MCF 10A (cell line): ENCODE measurements at regions of chr17 and their contacts with region 1.

Region 1: GRCh38 chr17:55433629-55434305 is 12.1 kb upstream of the MMD start:
- DNase-seq: peak; percentile 95
- H3K4me3 Mint-ChIP-seq: peak overlapping the region; percentile 30
- H3K27ac Mint-ChIP-seq: peak overlapping the region; percentile 96
- H3K4me1 Mint-ChIP-seq: peaks cover 44% of the 10 kb centered on the region
- H3K27me3 Mint-ChIP-seq: no peaks in the 10 kb centered on the region
- CTCF ChIP-seq: no peak

Region 2: GRCh38 chr17:55116440-55116914 is 317.3 kb before region 1 on chr17:
- CTCF ChIA-PET with region 1: no interaction called
- POLR2A ChIA-PET with region 1: no interaction called
- intact Hi-C with region 1: no loop called
- DNase-seq: no peak
- H3K4me3 Mint-ChIP-seq: no peak overlapping the region
- H3K27ac Mint-ChIP-seq: no peak overlapping the region
- H3K4me1 Mint-ChIP-seq: no peaks in the 10 kb centered on the region
- H3K27me3 Mint-ChIP-seq: no peaks in the 10 kb centered on the region
- CTCF ChIP-seq: no peak

Region 3: DNA sequence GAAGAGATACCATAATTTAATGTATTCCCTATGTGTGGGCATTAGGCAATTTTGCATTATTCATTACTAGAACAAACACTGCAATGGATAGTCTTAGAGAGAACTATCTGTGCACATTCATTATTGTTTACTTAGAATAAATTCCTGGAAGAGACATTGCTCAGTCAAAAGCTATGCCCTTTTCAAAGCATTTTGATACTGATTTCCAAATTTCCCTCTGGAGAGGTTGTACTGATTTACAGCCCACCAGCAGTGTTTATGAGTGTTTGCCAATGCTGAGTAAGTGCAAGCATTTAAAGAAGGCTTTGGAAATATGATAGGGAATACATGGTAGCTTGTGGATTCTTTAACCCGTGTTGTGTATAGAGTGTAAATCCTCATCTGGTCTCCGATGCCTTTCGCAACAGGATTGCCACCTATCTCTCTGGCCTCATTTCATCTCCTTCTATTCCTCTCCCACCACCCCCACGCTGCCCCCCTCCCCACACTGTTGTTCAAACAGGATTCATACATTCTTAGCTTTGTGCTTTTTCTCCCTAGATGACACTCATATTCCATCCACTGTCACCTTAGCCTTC is 21.2 kb after region 1 on chr17:
- CTCF ChIA-PET with region 1: interaction called, 4 read pairs
- POLR2A ChIA-PET with region 1: interaction called, 10 read pairs
- intact Hi-C with region 1: no loop called
- DNase-seq: peak; percentile 86
- H3K4me3 Mint-ChIP-seq: no peak overlapping the region
- H3K27ac Mint-ChIP-seq: peak overlapping the region; percentile 42
- H3K4me1 Mint-ChIP-seq: peaks cover 30% of the 10 kb centered on the region
- H3K27me3 Mint-ChIP-seq: no peaks in the 10 kb centered on the region
- CTCF ChIP-seq: no peak